ENCODE measurements at regions of chr13 and their contacts with region 1.

Region 1: GRCh38 chr13:31431722-31432137 is 232.0 kb downstream of the B3GLCT start:
- DNase-seq: peak; percentile 45
- H3K4me3 Mint-ChIP-seq: no peak overlapping the region
- H3K27ac Mint-ChIP-seq: no peak overlapping the region
- H3K4me1 Mint-ChIP-seq: peaks cover 18% of the 10 kb centered on the region
- H3K27me3 Mint-ChIP-seq: peaks cover 24% of the 10 kb centered on the region
- CTCF ChIP-seq: peak; percentile 69

Region 2: GRCh38 chr13:31310786-31311185 is 120.9 kb before region 1 on chr13:
- CTCF ChIA-PET with region 1: no interaction called
- intact Hi-C with region 1: no loop called
- DNase-seq: no peak
- H3K4me3 Mint-ChIP-seq: no peak overlapping the region
- H3K27ac Mint-ChIP-seq: no peak overlapping the region
- H3K4me1 Mint-ChIP-seq: no peaks in the 10 kb centered on the region
- H3K27me3 Mint-ChIP-seq: no peaks in the 10 kb centered on the region
- CTCF ChIP-seq: no peak

Region 3: DNA sequence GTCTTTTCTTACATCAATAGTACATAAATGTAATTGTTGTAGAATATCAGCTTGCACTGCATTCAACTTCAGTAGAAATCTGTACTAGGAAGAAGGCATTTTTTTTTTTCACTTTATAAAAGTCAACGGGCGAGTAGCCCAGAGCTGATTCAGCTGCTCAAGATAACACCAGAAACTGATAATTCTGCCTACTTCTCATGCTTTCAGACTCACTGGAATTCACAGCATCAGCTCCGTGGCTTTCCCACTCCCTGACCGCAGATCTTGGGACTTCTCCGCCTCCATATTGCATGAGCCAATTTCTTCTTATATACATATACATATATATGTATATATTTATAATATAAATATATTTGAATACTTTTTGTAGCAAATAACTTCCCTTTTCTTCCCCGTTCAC is 44.5 kb after region 1 on chr13:
- CTCF ChIA-PET with region 1: no interaction called
- intact Hi-C with region 1: no loop called
- DNase-seq: no peak
- H3K4me3 Mint-ChIP-seq: no peak overlapping the region
- H3K27ac Mint-ChIP-seq: no peak overlapping the region
- H3K4me1 Mint-ChIP-seq: no peaks in the 10 kb centered on the region
- H3K27me3 Mint-ChIP-seq: peaks cover 12% of the 10 kb centered on the region
- CTCF ChIP-seq: no peak

Region 4: GRCh38 chr13:31538067-31539042 is 106.6 kb after region 1 on chr13:
- CTCF ChIA-PET with region 1: interaction called, 3 read pairs
- intact Hi-C with region 1: loop called (anchors 10 kb)
- DNase-seq: peak; percentile 4
- H3K4me3 Mint-ChIP-seq: no peak overlapping the region
- H3K27ac Mint-ChIP-seq: no peak overlapping the region
- H3K4me1 Mint-ChIP-seq: peaks cover 14% of the 10 kb centered on the region
- H3K27me3 Mint-ChIP-seq: no peaks in the 10 kb centered on the region
- CTCF ChIP-seq: peak; percentile 13

Region 5: GRCh38 chr13:31742097-31742734 is 310.5 kb after region 1 on chr13:
- CTCF ChIA-PET with region 1: no interaction called
- intact Hi-C with region 1: loop called (anchors 1 kb)
- DNase-seq: peak; percentile 64
- H3K4me3 Mint-ChIP-seq: peak overlapping the region; percentile 39
- H3K27ac Mint-ChIP-seq: peak overlapping the region; percentile 19
- H3K4me1 Mint-ChIP-seq: peaks cover 8% of the 10 kb centered on the region
- H3K27me3 Mint-ChIP-seq: peaks cover 28% of the 10 kb centered on the region
- CTCF ChIP-seq: peak; percentile 79

Region 6: GRCh38 chr13:31797154-31797775 is 365.5 kb after region 1 on chr13:
- CTCF ChIA-PET with region 1: no interaction called
- intact Hi-C with region 1: loop called (anchors 2 kb)
- DNase-seq: peak; percentile 3
- H3K4me3 Mint-ChIP-seq: no peak overlapping the region
- H3K27ac Mint-ChIP-seq: no peak overlapping the region
- H3K4me1 Mint-ChIP-seq: no peaks in the 10 kb centered on the region
- H3K27me3 Mint-ChIP-seq: no peaks in the 10 kb centered on the region
- CTCF ChIP-seq: peak; percentile 12